Activated CD4-positive, alpha-beta T cell treated with anti-CD3 and anti-CD28 coated beads for 36 hours (primary cell): ENCODE measurements at regions of chr5 and their contacts with region 1.

Region 1: DNA sequence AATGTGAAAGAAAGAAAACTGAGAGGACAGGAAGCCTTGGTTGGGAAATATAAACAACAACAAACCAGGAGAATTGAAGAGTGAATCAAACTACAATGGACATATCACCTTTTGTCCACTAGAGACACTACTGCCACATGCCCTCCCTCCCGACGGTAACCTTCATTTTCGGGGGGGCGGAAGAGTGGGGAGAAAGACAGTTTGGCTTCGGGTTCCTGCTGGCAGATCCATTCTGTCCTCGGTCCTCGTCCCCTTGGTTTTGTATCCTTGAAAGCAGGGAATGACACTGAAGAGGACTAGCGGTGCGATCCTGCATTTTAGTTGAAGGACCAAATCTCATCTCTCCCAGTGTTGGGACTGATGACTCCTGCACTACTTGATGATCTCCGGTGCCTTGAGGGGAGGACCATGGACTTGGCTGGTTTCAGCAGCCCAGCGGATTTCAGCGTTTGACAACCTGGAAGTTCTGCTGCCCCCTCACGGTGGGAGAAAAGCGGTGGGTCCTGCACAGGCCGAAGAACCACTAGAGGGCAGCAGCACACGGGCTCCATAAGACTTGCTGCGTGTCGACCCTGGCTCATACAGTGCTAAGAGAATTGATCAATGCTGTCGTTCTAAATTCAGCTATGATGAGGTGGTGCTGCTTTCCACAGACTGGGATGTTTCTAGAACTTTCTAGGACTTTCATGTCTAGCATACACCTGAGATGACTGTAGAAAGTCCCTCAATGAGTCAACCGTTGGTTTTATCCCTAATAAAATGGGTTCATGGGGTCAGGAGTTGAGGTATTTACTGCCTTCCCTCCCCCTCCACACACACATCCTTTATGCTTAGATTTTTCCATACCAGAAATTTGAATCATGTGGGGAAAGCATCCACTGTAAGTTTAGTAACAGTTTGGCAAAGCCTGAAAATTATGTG is 15.1 kb upstream of the ZNF131 start:
- DNase-seq: peak; percentile 93
- ATAC-seq: peak; percentile 91
- H3K4me3 Mint-ChIP-seq: peak overlapping the region; percentile 71
- H3K27ac Mint-ChIP-seq: peak overlapping the region; percentile 91
- H3K4me1 Mint-ChIP-seq: peaks cover 43% of the 10 kb centered on the region
- H3K27me3 Mint-ChIP-seq: no peaks in the 10 kb centered on the region

Region 2: DNA sequence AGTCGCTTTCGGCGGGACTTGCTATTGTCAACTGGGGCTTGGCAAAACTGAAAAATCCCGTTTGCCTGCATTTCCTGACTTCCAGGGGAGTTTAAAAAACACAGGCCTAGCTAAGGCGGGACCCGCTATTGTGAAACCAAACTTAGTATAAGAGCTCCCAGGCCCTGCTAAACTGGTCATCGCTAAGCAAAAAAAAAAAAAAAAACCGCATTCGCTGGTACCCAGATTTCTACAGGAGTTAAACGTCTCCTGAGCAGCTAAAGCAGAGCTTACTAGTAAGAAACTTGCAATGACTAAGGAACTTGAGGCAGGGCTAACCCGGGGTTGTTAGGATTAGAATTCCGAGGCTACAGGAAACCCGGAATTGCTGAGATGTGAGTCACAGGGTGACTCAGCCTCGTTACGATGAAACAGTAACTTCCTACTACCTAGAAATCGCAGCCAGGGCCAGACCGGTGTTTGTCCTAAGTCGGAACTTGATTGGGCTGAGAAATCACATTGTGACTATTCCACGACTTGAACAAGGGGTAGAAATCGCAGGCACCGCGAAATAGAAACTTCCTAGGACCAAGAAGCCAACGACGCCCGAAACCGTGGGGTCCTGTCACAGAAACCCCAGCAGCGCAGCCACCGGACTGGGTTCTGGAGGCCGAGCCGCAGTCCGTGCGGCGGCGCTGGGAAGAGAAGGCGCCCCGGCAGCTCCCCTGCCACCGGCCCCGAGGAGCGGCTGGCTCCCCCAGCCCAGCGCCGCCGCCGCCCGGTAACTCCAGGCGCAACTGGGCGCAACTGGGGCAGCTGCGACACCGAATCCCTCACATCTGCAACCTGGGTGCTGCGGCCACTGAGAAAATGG is 155.0 kb before region 1 on chr5:
- CTCF ChIA-PET with region 1: no interaction called
- POLR2A ChIA-PET with region 1: no interaction called
- intact Hi-C with region 1: loop called in 1 of 2 experiments (anchors 5 kb)
- DNase-seq: peak; percentile 82
- ATAC-seq: peak; percentile 59
- H3K4me3 Mint-ChIP-seq: peak overlapping the region; percentile 83
- H3K27ac Mint-ChIP-seq: peak overlapping the region; percentile 91
- H3K4me1 Mint-ChIP-seq: peaks cover 17% of the 10 kb centered on the region
- H3K27me3 Mint-ChIP-seq: no peaks in the 10 kb centered on the region

Region 3: GRCh38 chr5:43008369-43009153 is 97.1 kb before region 1 on chr5:
- CTCF ChIA-PET with region 1: interaction called, 3 read pairs
- POLR2A ChIA-PET with region 1: no interaction called
- intact Hi-C with region 1: loop called in 1 of 2 experiments (anchors 5 kb)
- DNase-seq: peak; percentile 94
- ATAC-seq: peak; percentile 64
- H3K4me3 Mint-ChIP-seq: peak overlapping the region; percentile 76
- H3K27ac Mint-ChIP-seq: peak overlapping the region; percentile 94
- H3K4me1 Mint-ChIP-seq: peaks cover 21% of the 10 kb centered on the region
- H3K27me3 Mint-ChIP-seq: no peaks in the 10 kb centered on the region

Region 4: DNA sequence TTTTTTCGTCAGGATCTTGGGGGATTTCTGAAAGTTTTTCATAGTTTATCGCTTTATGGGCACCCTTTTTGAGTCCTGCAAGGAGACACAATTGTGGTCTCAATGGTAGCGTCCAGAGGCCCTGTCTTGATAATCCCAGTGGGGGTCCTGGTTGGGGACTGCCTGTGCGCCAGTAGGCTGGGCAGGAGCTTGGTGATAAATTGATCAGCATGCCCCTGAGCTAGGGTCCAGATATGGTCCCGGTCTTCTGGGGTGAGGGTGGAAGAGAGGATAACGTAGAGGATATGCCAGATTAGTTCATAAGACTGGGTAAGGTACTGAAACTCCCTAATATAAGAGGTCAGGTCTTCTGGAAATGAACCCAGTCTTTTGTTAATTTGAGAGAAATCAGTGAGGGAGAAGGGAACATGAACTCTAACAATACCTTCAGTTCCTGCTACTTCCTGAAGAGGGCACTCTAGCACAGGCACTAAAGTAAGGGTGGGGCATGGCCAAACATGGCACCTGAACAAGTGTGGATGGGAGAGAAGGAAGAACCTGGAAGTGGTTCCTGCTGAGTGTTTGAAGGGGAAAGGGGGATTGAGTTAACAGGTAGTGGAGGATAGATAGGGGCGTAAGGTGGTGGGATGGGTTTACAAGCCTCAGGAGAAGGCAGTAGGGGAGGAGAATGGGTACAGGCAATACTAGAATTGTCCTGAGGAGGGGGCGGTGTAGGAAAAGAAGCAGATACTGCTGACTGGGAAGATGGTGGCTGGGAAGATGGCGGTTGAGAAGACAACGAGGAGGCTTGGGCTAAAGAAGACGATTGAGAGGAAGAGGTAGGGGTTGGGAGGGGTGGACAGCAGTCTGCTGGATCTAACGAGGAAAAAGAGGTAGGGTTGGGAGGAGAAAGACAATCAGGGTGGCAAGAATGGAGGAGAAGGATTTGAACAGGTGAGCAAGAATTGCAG is 31.8 kb before region 1 on chr5:
- CTCF ChIA-PET with region 1: interaction called, 5 read pairs
- POLR2A ChIA-PET with region 1: interaction called, 5 read pairs
- intact Hi-C with region 1: loop called in 1 of 2 experiments (anchors 1 kb)
- DNase-seq: peak; percentile 69
- ATAC-seq: peak; percentile 78
- H3K4me3 Mint-ChIP-seq: no peak overlapping the region
- H3K27ac Mint-ChIP-seq: no peak overlapping the region
- H3K4me1 Mint-ChIP-seq: peaks cover 38% of the 10 kb centered on the region
- H3K27me3 Mint-ChIP-seq: no peaks in the 10 kb centered on the region

Region 5: DNA sequence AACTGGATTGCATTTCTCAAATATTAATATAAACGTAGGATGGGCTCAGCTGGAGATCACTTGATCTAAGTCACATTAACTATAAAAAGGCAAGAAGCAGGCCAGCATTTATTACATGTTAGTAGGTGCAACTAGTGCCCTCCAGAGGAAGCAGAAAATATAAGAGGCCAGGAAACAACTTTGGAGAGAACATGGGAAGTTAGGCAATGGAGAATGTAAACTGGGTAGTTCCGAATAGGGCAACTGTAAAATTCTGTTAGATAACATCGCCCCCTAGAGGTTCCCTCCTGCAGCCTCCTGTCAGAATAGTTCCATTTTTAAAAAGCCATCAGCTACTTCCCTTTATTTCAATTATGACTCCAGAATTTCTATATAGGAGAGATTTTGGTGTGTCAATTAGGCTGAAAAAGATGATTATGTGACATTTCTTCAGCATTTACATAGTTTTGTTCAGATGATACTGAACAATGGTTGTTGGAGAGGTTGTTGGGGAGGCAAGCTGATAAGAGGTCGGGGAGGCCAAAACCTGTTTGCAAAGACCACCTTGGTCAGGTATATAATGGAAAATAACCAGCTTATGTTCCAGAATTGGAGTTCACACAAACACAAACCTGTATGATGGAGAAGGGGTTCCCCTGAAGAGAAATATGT is 284.2 kb after region 1 on chr5:
- CTCF ChIA-PET with region 1: interaction called, 30 read pairs
- POLR2A ChIA-PET with region 1: no interaction called
- intact Hi-C with region 1: loop called (anchors 1 kb)
- DNase-seq: peak; percentile 63
- ATAC-seq: peak; percentile 85
- H3K4me3 Mint-ChIP-seq: no peak overlapping the region
- H3K27ac Mint-ChIP-seq: no peak overlapping the region
- H3K4me1 Mint-ChIP-seq: peaks cover 32% of the 10 kb centered on the region
- H3K27me3 Mint-ChIP-seq: no peaks in the 10 kb centered on the region

Region 6: DNA sequence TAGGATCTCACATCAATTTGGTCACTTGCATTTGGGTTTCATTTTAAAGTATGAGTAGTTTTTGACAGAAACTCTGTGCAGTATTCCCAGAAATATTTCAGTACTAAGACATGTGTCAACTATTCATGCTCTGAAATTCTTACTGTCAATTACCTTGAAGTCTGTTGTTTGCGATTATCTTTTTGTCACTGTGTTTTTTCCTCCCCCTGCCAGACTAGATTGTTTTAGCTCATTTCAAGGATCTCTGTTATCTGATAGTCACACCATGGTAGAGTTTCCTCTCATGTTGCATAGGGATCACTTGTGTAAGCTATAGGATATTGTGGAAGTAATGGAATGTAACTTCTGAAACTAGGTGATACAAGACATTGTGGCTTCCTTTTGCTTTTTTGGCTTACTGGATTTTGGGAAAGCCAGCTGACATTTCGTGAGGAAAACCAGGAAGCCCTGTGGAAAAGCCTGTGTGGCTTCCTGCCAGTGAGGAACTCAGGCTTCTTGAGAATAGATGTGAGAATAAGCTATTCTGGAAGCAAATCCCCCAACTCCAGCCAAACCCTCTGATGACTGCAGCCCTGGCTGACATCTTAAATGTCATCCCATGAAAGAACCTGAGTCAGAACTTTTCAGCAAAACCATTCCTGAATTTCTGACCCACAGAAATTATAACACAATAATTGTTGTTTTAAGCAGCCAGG is 1161.4 kb after region 1 on chr5:
- CTCF ChIA-PET with region 1: no interaction called
- POLR2A ChIA-PET with region 1: no interaction called
- intact Hi-C with region 1: no loop called
- DNase-seq: no peak
- ATAC-seq: no peak
- H3K4me3 Mint-ChIP-seq: no peak overlapping the region
- H3K27ac Mint-ChIP-seq: no peak overlapping the region
- H3K4me1 Mint-ChIP-seq: no peaks in the 10 kb centered on the region
- H3K27me3 Mint-ChIP-seq: no peaks in the 10 kb centered on the region